Heart left ventricle (tissue), 16 donors: ENCODE measurements at regions of chr17 and their contacts with region 1.

Region 1: DNA sequence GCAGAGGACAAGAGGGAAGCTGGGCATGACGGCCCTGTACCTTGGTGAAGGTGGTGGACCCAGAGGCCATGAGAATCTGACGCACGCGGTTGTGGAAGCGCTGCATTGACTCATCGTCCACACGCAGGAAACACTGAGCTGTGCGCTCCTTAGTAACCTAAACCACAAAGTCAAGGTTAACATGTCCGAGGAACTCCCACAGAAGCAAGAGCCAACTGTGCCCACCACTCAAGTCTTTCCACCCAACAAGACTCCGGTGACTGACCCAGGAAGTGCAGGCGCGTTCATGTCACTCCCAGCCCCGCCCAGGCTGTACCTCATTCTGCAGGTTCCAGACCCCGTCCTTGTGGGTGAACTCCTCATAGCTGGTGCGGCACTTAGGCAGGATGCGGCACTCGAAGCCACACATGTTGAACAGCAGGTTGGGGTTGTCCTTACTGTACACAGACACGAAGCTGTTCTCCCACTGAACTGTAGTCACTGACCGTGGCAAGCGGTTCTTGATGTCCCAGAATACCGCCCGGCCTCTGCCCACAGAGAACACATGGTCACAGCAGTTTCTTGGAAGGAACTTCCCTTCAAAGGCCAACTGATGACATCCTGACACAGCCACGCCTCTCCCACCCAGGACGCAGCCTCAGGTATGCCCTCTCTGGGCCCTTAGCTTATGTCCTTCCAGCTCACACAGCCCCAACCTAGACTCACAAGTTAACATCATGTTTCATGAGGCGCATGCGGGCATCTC is 11.5 kb downstream of the PRPF8 start:
- DNase-seq: no peak
- ATAC-seq: no peak
- H3K4me3 ChIP-seq: no peak overlapping the region
- H3K27ac ChIP-seq: no peak overlapping the region
- H3K4me1 ChIP-seq: peaks cover 3 to 19% (median 13%) of the 10 kb centered on the region in 12 donors
- H3K27me3 ChIP-seq: no peaks in the 10 kb centered on the region
- CTCF ChIP-seq: no peak
- POLR2A ChIP-seq: no peak

Region 2: GRCh38 chr17:1628856-1629646 is 44.2 kb before region 1 on chr17:
- intact Hi-C with region 1: no loop called
- DNase-seq: peak; percentile 94 to 97 (median 96)
- ATAC-seq: peak; percentile 83 to 90 (median 88)
- H3K4me3 ChIP-seq: peak overlapping the region; percentile 32 to 96 (median 80)
- H3K27ac ChIP-seq: peak overlapping the region; percentile 80 to 97 (median 92)
- H3K4me1 ChIP-seq: peaks cover 0 to 56% (median 14%) of the 10 kb centered on the region in 12 donors
- H3K27me3 ChIP-seq: no peaks in the 10 kb centered on the region
- CTCF ChIP-seq: peak in 11 of 12 donors; percentile 31 to 66 (median 56)
- POLR2A ChIP-seq: peak in 1 of 2 donors; percentile 79

Region 3: GRCh38 chr17:1648963-1649843 is 24.0 kb before region 1 on chr17:
- intact Hi-C with region 1: loop called in 1 of 10 experiments (anchors 2 kb)
- DNase-seq: peak; percentile 91 to 98 (median 95)
- ATAC-seq: peak; percentile 25 to 67 (median 50)
- H3K4me3 ChIP-seq: peak overlapping the region; percentile 68 to 99 (median 83)
- H3K27ac ChIP-seq: peak overlapping the region; percentile 93 to 100 (median 99)
- H3K4me1 ChIP-seq: peaks cover 7 to 59% (median 48%) of the 10 kb centered on the region in 12 donors
- H3K27me3 ChIP-seq: no peaks in the 10 kb centered on the region
- CTCF ChIP-seq: peak in 11 of 12 donors; percentile 73 to 97 (median 87)
- POLR2A ChIP-seq: peak; percentile 61 to 89

Region 4: DNA sequence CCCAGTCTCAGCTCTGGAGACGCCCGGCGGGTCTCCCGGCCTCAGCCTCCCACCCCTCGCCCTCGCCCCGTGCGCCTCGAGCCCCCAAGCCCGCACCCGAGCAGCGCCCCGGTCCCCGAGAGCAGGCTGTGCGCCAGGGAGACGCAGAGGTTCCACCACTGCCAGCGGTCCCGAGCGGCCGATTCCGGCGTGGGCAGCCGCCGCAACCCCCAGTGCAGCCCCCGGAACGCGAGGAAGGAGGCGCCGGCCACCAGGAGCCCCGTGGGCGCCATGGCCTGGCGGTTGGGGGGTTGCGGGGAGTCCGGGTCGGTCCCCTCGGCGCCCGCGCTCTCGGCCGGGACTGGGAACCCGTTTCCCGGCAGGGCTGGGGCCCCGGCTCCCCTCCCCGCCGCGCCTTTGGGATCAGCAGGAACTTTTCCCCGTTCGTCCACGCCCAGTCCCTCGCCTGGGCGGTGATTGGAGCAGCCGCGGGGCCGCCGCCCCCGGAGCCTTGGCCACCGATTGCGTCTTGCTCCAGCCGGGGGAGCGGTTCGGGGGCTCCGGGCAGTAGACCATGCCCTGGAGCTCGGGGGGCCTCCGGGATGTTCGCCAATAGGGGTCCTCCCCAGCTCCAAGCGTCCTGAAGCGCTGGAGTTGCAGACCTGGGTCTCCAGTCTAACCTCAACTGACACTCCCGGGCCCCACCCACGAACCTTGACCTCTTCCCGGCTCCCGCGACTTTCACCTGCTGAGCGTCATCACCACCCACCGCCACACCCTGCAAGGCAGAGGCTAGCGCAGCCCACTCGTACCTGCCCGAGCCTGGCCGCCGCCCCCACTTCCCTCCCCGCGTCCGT is 37.0 kb after region 1 on chr17 and contains the start of gene TLCD2:
- intact Hi-C with region 1: loop called in 7 of 10 experiments (anchors 1 to 5 kb)
- DNase-seq: peak; percentile 81 to 88 (median 84)
- ATAC-seq: peak in 3 of 4 donors; percentile 20 to 54 (median 50)
- H3K4me3 ChIP-seq: peak within 1 kb of the TSS; percentile 57 to 98 (median 75)
- H3K27ac ChIP-seq: peak within 1 kb of the TSS; percentile 15 to 88 (median 80)
- H3K4me1 ChIP-seq: peaks cover 4 to 55% (median 42%) of the 10 kb centered on the region in 12 donors
- H3K27me3 ChIP-seq: no peaks in the 10 kb centered on the region
- CTCF ChIP-seq: no peak
- POLR2A ChIP-seq: peak in 1 of 2 donors; percentile 67
- total RNA-seq, gene TLCD2: 1.5 to 6.1 (median 2.3) TPM

Region 5: GRCh38 chr17:1783834-1784611 is 110.8 kb after region 1 on chr17:
- intact Hi-C with region 1: loop called (anchors 1 to 10 kb)
- DNase-seq: peak in 4 of 5 donors; percentile 75 to 91 (median 82)
- ATAC-seq: peak; percentile 74 to 86 (median 80)
- H3K4me3 ChIP-seq: peak overlapping the region in 8 of 12 donors; percentile 12 to 43 (median 20)
- H3K27ac ChIP-seq: peak overlapping the region; percentile 83 to 97 (median 92)
- H3K4me1 ChIP-seq: peaks cover 5 to 89% (median 60%) of the 10 kb centered on the region in 12 donors
- H3K27me3 ChIP-seq: no peaks in the 10 kb centered on the region
- CTCF ChIP-seq: peak; percentile 45 to 81 (median 72)
- POLR2A ChIP-seq: peak in 1 of 2 donors; percentile 69

Region 6: DNA sequence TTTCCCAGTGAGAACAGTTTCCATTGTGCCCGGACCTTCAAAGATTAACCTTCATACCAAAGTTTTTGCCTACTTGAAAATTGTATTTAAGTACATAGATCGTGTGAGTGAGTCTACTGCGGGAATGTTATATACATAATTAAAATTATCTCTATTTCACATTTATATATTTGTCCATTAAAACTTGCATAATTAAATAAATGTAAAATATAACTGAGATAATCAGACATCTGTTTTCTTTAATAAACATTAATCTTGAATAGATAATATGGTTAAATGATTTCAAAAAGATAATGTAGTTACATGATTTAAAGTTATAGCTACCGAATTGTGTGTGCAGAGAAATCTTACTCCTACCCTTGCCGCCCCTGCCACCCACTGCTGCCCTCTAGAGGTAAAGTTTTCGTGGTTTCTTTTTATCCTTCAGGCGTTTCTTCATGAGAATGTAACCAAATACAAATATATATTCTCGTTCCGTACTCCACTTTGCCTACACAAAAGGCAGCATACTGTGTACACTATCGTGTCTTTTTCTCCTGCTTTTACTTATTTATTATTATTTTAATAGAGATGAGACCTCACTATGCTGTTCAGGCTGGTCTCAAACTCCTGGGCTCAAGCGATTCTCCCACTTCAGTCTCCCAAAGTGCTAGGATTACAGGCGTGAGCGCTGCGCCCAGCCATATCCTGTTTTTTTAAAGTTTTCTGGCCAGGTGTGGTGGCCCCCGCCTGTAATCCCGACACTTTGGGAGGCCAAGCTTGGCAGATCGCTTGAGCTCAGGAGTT is 192.2 kb after region 1 on chr17:
- intact Hi-C with region 1: loop called in 3 of 10 experiments (anchors 10 kb)
- DNase-seq: no peak
- ATAC-seq: peak in 2 of 4 donors; percentile 41 to 51
- H3K4me3 ChIP-seq: no peak overlapping the region
- H3K27ac ChIP-seq: no peak overlapping the region
- H3K4me1 ChIP-seq: no peaks in the 10 kb centered on the region
- H3K27me3 ChIP-seq: no peaks in the 10 kb centered on the region
- CTCF ChIP-seq: peak; percentile 49 to 73 (median 66)
- POLR2A ChIP-seq: no peak

Region 7: GRCh38 chr17:2041561-2042366 is 368.6 kb after region 1 on chr17 and contains the start of gene OVCA2:
- intact Hi-C with region 1: loop called in 2 of 10 experiments (anchors 5 to 10 kb)
- DNase-seq: peak; percentile 95 to 97 (median 95)
- ATAC-seq: peak; percentile 77 to 96 (median 93)
- H3K4me3 ChIP-seq: peak within 1 kb of the TSS; percentile 43 to 87 (median 76)
- H3K27ac ChIP-seq: peak within 1 kb of the TSS; percentile 81 to 97 (median 93)
- H3K4me1 ChIP-seq: peaks cover 3 to 38% (median 22%) of the 10 kb centered on the region in 12 donors
- H3K27me3 ChIP-seq: no peaks in the 10 kb centered on the region
- CTCF ChIP-seq: peak; percentile 35 to 81 (median 65)
- POLR2A ChIP-seq: peak in 1 of 2 donors; percentile 77
- total RNA-seq, gene OVCA2: 16.0 to 30.2 (median 20.0) TPM